AG04449 (cell line): ENCODE measurements at regions of chr3 and their contacts with region 1.

Region 1: DNA sequence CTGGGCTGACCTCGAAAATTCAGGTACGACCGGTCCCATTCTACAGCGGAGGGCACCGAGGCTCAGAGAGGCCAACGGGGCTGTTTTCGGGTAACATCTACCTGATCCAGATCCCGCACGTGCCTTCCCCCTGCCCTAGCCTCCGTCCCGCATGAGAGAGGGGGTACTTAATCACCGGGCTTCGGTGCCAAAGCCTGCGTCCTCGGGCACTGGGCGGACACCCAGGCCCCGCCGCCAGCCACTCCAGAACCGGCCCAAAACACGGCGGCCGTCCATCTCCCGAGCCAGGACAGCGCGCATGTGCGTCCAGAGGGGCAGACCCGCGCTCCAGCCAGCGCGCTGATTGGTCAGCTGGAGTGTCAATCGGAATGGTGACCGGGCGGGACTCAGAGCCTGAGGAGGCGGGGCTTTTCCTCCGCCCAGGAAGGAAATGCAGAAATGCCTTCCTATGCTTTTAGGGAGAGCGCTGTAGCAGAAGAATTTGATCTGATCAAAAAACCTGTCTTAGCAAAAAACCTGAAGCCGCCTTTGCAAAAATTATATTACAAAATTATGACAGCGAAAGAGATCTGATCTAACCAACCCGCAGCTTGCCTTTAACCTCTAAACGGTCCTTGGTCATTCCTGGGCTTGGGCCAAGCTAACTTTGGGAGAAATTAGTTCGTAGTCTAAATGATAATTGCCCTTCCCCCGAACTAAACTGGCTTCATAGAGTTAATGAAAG is at the start of gene RPUSD3:
- DNase-seq: peak; percentile 55
- H3K4me3 ChIP-seq: peak within 1 kb of the TSS; percentile 94
- CTCF ChIP-seq: no peak

Region 2: DNA sequence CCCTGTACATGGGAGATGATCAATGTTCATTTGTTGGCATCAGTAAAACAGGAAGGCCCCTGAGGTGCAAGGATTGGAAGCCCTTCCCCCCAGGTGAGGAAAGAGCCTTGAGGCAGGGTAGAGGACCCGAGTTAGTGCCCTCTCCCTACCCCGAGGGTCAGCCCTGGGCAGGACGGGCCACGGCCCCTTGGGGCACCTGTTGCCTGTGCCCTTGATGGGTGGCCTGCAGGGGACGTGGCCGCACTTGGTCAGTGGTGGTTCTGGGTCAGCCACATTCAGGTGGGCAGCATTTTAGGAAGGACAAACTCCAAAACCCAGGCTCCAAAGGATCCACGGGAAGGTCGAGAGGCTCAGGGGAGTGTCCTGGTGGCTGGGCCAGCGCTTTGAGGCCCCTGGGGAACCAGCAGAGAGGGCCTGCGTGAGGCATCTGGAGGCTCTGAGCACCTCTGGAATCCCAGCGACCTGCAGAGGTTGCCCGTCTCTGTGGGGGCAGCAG is 15.7 kb after region 1 on chr3:
- CTCF ChIA-PET with region 1: interaction called, 10 read pairs
- POLR2A ChIA-PET with region 1: no interaction called
- DNase-seq: no peak
- H3K4me3 ChIP-seq: no peak overlapping the region
- CTCF ChIP-seq: no peak